Psoas muscle (tissue), 8 donors: ENCODE measurements at regions of chr5 and their contacts with region 1.

Region 1: GRCh38 chr5:142145106-142145900 is 36.7 kb downstream of the NDFIP1 start:
- DNase-seq: peak in 1 of 2 donors; percentile 36
- ATAC-seq: peak; percentile 82 to 93 (median 86)
- H3K4me3 ChIP-seq: no peak overlapping the region
- H3K27ac ChIP-seq: no peak overlapping the region
- H3K4me1 ChIP-seq: no peaks in the 10 kb centered on the region
- H3K27me3 ChIP-seq: no peaks in the 10 kb centered on the region
- CTCF ChIP-seq: peak; percentile 69

Region 2: DNA sequence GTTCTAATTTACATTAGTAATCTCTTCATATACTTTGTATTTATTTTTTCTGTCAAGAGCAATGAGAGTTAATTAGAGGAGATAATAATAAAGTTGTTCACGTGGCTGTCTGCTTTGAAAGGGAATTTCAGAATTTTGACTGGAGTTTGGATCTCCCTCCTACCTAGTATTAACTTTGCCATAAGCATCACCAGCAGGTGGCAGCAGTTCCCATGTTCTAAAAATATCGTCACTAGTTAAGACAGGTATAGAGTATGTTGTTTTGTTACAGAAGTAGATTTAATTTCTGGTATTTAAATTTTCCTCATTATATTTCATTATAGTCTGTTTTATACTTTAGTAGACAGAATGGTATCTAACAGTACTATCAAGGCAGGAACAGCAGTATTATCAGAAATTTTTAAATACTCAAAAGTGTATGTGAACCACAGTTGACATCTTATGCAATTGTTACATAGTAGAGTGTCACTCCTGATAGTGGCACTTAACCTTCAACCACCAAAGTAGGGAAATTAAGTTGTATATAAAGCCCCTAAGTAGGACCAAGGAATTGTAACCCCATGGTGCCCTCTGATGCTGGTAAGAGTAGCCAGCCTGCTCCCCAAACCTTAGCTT is 152.8 kb before region 1 on chr5:
- intact Hi-C with region 1: loop called (anchors 1 to 5 kb)
- DNase-seq: peak; percentile 58 to 74
- ATAC-seq: peak; percentile 65 to 89 (median 76)
- H3K4me3 ChIP-seq: no peak overlapping the region
- H3K27ac ChIP-seq: no peak overlapping the region
- H3K4me1 ChIP-seq: peaks cover 5% of the 10 kb centered on the region
- H3K27me3 ChIP-seq: no peaks in the 10 kb centered on the region
- CTCF ChIP-seq: peak; percentile 84

Region 3: DNA sequence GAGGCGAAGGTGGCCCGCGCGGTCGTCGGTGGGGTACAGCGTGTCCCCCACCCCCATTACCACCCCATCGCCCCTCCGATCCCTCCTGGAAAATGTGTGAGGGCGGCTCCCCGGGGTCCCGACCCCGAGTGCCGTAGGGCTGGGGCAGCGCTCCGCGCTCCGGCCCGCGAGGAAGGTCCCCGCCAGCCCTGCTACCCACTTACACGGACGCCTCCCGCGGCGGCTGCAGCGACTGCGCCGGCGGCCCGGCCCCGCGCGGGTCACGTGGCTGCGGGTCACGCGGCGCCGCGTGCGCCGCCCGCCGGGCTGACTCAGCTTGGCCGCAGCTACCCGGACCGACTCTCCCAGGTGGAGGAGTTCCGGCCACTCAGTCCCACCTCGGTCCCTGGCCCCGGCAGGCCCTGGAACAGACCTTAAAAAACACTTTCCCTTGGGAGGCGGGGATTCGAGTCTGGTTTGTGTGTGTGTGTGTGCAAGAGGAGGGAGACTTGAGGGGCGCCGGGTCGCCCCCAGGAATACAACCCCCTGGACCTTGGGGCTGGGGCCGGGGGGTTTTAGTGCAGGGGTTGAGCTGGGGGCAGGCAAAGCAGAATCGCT is 132.4 kb before region 1 on chr5 and contains the start of gene GNPDA1:
- intact Hi-C with region 1: loop called in 1 of 2 experiments (anchors 5 kb)
- DNase-seq: peak; percentile 86 to 92
- ATAC-seq: peak; percentile 92 to 94 (median 94)
- H3K4me3 ChIP-seq: peak within 1 kb of the TSS; percentile 82
- H3K27ac ChIP-seq: peak within 1 kb of the TSS; percentile 91
- H3K4me1 ChIP-seq: peaks cover 20% of the 10 kb centered on the region
- H3K27me3 ChIP-seq: no peaks in the 10 kb centered on the region
- CTCF ChIP-seq: peak; percentile 33
- total RNA-seq, gene GNPDA1: 20.8 to 29.5 (median 25.7) TPM

Region 4: GRCh38 chr5:142888469-142889085 is 743.3 kb after region 1 on chr5:
- intact Hi-C with region 1: loop called in 1 of 2 experiments (anchors 10 kb)
- DNase-seq: no peak
- ATAC-seq: peak; percentile 72 to 87 (median 78)
- H3K4me3 ChIP-seq: no peak overlapping the region
- H3K27ac ChIP-seq: no peak overlapping the region
- H3K4me1 ChIP-seq: no peaks in the 10 kb centered on the region
- H3K27me3 ChIP-seq: no peaks in the 10 kb centered on the region
- CTCF ChIP-seq: peak; percentile 85